ENCODE measurements at regions of chr4 and their contacts with region 1.

Region 1: GRCh38 chr4:66108898-66109297 is 438.6 kb upstream of the EPHA5 start:
- DNase-seq: no peak
- ATAC-seq: no peak
- H3K4me3 ChIP-seq: no peak overlapping the region
- H3K4me3 Mint-ChIP-seq: no peak overlapping the region
- H3K27ac ChIP-seq: no peak overlapping the region
- H3K27ac Mint-ChIP-seq: no peak overlapping the region
- H3K4me1 ChIP-seq: no peaks in the 10 kb centered on the region
- H3K4me1 Mint-ChIP-seq: no peaks in the 10 kb centered on the region
- H3K27me3 ChIP-seq: no peaks in the 10 kb centered on the region
- H3K27me3 Mint-ChIP-seq: no peaks in the 10 kb centered on the region
- CTCF ChIP-seq: no peak

Region 2: GRCh38 chr4:65623506-65623905 is 485.4 kb before region 1 on chr4:
- intact Hi-C with region 1: no loop called
- DNase-seq: no peak
- ATAC-seq: no peak
- H3K4me3 ChIP-seq: no peak overlapping the region
- H3K4me3 Mint-ChIP-seq: no peak overlapping the region
- H3K27ac ChIP-seq: no peak overlapping the region
- H3K27ac Mint-ChIP-seq: no peak overlapping the region
- H3K4me1 ChIP-seq: no peaks in the 10 kb centered on the region
- H3K4me1 Mint-ChIP-seq: no peaks in the 10 kb centered on the region
- H3K27me3 ChIP-seq: no peaks in the 10 kb centered on the region
- H3K27me3 Mint-ChIP-seq: no peaks in the 10 kb centered on the region
- CTCF ChIP-seq: no peak

Region 3: GRCh38 chr4:66095065-66095464 is 13.8 kb before region 1 on chr4:
- intact Hi-C with region 1: loop called (anchors 1 kb)
- DNase-seq: no peak
- ATAC-seq: no peak
- H3K4me3 ChIP-seq: no peak overlapping the region
- H3K4me3 Mint-ChIP-seq: no peak overlapping the region
- H3K27ac ChIP-seq: no peak overlapping the region
- H3K27ac Mint-ChIP-seq: no peak overlapping the region
- H3K4me1 ChIP-seq: no peaks in the 10 kb centered on the region
- H3K4me1 Mint-ChIP-seq: no peaks in the 10 kb centered on the region
- H3K27me3 ChIP-seq: no peaks in the 10 kb centered on the region
- H3K27me3 Mint-ChIP-seq: no peaks in the 10 kb centered on the region
- CTCF ChIP-seq: no peak